ENCODE measurements at regions of chr11 and their contacts with region 1.

Region 1: GRCh38 chr11:73325036-73325981 is 17.2 kb downstream of the ARHGEF17 start:
- DNase-seq: no peak
- H3K4me3 ChIP-seq: no peak overlapping the region
- H3K27ac ChIP-seq: no peak overlapping the region
- H3K4me1 ChIP-seq: peaks cover 44% of the 10 kb centered on the region
- H3K27me3 ChIP-seq: no peaks in the 10 kb centered on the region
- CTCF ChIP-seq: no peak
- POLR2A ChIP-seq: no peak

Region 2: DNA sequence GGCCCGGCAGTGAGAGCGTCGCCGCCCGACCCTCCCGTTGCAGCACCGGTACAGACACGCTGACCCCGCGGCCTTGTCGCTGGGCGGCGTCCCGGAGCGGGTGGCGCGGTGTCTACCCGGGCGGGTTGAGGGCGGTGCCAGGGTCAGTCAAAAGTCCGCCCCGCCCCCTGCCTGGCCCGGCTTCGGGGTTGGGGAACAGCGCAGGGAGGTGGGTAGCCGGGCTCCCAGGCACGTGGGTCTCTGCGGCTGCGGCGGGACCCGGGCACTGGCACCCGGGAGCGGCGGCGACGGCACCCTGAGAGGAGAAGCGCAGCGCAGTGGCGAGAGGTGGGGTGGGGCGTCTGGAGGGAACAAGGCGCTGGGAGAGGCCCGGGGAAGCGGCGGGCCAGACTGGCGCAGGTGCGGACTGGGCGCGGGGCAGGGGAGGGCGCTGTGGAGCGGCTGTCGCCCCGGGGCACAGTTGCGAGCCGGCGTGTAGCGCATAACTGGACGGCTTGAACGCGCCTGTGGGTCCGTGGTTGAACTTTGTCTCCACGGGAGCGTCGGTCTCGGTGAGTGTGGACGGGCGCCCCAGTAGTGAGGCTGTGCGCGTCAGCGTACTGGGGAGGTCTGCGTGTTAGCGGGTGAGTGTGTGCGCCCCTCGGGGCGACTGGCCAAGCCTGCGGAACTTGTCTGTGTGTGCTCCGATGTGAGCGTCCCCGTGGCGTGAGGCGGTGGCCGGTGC is 107.0 kb before region 1 on chr11 and contains the start of gene P2RY2:
- CTCF ChIA-PET with region 1: no interaction called
- POLR2A ChIA-PET with region 1: no interaction called
- dilution Hi-C with region 1: no loop called
- intact Hi-C with region 1: no loop called
- DNase-seq: peak; percentile 59
- H3K4me3 ChIP-seq: peak within 1 kb of the TSS in 2 of 3 experiments; percentile 0 to 30
- H3K27ac ChIP-seq: no peak within 1 kb of the TSS
- H3K4me1 ChIP-seq: no peaks in the 10 kb centered on the region
- H3K27me3 ChIP-seq: no peaks in the 10 kb centered on the region
- CTCF ChIP-seq: peak; percentile 58 to 75
- POLR2A ChIP-seq: no peak
- total RNA-seq, gene P2RY2: 4.4 and 5.6 TPM in 2 replicates

Region 3: DNA sequence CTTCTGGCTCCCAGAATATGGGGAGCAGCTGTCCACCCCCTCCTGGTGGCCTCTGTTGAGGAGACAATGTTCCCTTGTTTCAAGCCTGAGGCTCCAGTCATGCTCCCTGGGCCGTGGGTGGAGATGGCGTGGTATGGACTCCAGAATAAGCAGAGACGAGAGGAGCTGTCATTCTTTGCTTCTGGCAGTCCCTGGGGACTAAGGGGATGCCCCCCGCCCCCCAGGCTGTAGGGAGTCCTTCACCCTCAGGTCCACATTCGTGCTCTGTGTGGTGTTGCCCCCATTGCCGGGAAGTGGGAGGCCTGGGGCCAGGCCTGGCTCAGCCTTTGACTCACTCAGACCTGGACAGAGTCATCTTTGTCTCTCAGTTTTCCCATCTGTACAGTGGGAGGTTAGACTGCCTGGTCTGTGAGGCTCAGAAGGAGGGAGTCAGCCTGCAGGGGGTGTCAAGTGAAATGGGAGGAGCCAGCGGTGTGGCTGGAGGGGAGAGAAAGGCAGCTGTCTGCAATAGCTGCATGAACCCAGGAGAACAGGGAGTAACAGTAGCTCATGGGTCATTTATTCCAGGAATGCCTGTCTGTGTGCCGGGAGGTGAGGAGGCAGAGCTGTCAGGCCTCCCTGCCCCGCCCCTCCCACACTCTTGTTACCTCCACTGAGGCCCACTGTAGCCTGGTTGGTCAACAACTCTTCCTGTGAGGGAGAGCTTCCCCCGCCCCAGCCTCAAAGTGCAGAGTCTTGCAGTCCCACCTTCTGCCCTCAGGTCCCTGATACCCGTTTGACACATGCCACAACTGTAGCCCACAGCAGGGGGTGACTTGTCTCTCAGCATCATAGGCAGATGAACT is 11.0 kb before region 1 on chr11:
- CTCF ChIA-PET with region 1: interaction called, 53 read pairs
- POLR2A ChIA-PET with region 1: interaction called, 14 read pairs
- dilution Hi-C with region 1: no loop called
- intact Hi-C with region 1: loop called (anchors 1 kb)
- DNase-seq: no peak
- H3K4me3 ChIP-seq: no peak overlapping the region
- H3K27ac ChIP-seq: peak overlapping the region; percentile 56
- H3K4me1 ChIP-seq: peaks cover 35% of the 10 kb centered on the region
- H3K27me3 ChIP-seq: no peaks in the 10 kb centered on the region
- CTCF ChIP-seq: no peak
- POLR2A ChIP-seq: no peak

Region 4: GRCh38 chr11:73335204-73335923 is 10.1 kb after region 1 on chr11:
- CTCF ChIA-PET with region 1: interaction called, 57 read pairs
- POLR2A ChIA-PET with region 1: interaction called, 5 read pairs
- dilution Hi-C with region 1: no loop called
- intact Hi-C with region 1: loop called (anchors 1 kb)
- DNase-seq: peak; percentile 88
- H3K4me3 ChIP-seq: no peak overlapping the region
- H3K27ac ChIP-seq: peak overlapping the region; percentile 70
- H3K4me1 ChIP-seq: peaks cover 33% of the 10 kb centered on the region
- H3K27me3 ChIP-seq: no peaks in the 10 kb centered on the region
- CTCF ChIP-seq: peak; percentile 95 to 96
- POLR2A ChIP-seq: no peak

Region 5: DNA sequence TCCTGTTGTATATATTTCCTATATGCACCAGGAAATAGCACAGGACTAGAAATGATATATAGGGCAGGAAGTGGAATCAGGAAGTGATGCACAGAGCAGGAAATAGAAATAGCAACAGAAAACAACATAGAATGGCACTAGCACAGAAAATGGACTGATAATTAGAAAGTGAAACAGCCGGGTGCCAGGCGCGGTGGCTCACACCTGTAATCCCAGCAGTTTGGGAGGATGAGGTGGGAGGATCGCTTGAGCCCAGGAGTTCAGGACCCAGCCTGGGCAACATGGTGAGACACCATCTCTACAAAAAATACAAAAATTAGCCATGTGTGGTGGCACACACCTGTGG is 40.9 kb after region 1 on chr11:
- CTCF ChIA-PET with region 1: no interaction called
- POLR2A ChIA-PET with region 1: no interaction called
- dilution Hi-C with region 1: no loop called
- intact Hi-C with region 1: loop called (anchors 1 kb)
- DNase-seq: no peak
- H3K4me3 ChIP-seq: no peak overlapping the region
- H3K27ac ChIP-seq: no peak overlapping the region
- H3K4me1 ChIP-seq: peaks cover 15% of the 10 kb centered on the region
- H3K27me3 ChIP-seq: no peaks in the 10 kb centered on the region
- CTCF ChIP-seq: no peak
- POLR2A ChIP-seq: no peak